Activated B cell treated with CpG ODN at 0.5 μM for 24 hours (primary cell): ENCODE measurements at regions of chr22 and their contacts with region 1.

Region 1: GRCh38 chr22:32103658-32104315 is 55.3 kb downstream of the C22orf42 start:
- DNase-seq: no peak
- ATAC-seq: no peak
- H3K4me3 Mint-ChIP-seq: no peak overlapping the region
- H3K27ac Mint-ChIP-seq: no peak overlapping the region
- H3K4me1 Mint-ChIP-seq: no peaks in the 10 kb centered on the region
- H3K27me3 Mint-ChIP-seq: peaks cover 25% of the 10 kb centered on the region
- CTCF ChIP-seq: no peak

Region 2: DNA sequence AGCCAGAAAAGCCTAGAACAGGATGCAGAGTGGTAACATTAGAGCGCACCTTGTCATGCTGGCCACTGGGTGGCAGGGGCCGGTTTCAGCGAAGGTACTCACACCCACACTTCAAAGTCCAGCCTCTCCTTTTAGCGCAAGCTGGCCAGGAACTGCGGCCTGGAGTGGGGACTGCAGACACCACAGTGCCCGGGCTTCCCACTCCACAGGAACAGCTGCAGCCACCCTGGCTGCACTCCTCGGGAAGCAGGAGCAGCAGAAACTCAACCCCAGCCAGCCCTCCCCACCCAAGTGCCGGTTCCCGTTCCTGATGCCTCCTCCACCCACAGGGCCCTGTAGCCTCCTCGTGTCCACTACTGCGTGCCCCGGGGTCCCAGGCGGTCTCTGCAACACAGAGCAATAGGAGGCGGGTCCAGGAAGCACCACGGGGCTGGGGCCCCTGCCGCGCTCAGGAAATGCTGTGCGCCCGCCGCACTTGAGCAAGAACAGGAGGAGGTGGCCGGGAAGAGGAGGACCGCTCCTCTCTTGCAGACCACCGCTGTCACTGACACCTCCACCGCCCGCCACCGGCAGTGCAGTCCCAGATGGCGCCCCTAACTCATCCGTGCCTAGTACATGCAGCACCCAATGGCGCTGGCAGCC is 98.9 kb after region 1 on chr22:
- CTCF ChIA-PET with region 1: no interaction called
- POLR2A ChIA-PET with region 1: no interaction called
- intact Hi-C with region 1: loop called (anchors 1 kb)
- DNase-seq: no peak
- ATAC-seq: no peak
- H3K4me3 Mint-ChIP-seq: no peak overlapping the region
- H3K27ac Mint-ChIP-seq: no peak overlapping the region
- H3K4me1 Mint-ChIP-seq: no peaks in the 10 kb centered on the region
- H3K27me3 Mint-ChIP-seq: peaks cover 40% of the 10 kb centered on the region
- CTCF ChIP-seq: no peak

Region 3: DNA sequence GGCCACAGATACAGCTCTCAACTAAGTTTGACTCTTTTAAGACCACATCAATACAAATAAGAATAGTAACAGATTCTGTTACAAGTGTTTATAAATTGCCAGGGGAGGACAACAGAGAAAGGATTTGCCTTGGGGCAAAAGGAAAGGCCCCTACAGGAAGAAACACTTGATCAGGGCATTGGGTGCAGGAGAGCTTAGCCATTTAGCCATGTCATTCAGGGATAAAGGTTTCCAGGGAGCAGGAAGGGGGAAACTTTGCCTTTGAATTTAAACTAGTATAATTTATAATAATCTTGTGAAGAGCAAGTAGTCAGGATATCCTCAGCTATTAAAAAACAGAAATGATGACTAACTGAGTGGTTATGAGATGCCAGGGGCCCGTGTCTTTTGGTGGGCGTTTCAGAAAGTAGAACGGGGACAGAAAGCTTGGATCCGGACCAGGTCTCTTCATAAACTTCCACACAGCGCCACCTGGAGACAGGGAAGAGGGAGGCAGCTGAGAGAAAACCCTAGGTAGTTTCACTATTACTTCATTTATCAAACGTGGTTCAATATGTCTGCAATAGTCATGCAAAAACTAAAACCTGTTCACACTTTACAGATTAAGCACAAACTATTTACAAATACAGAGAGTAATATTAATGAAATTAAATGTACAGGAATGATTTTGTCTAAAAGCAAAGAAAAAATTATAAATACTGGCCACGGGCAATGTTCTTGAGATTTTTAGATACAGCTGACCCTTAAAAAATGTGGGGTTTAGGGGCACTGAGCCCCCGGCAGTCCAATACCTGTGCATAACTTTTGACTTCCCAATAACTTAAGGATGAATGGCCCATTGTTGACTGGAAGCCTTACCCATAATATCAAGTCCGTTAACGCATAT is 162.3 kb after region 1 on chr22:
- CTCF ChIA-PET with region 1: interaction called, 16 read pairs
- POLR2A ChIA-PET with region 1: no interaction called
- intact Hi-C with region 1: loop called (anchors 1 kb)
- DNase-seq: no peak
- ATAC-seq: peak; percentile 42
- H3K4me3 Mint-ChIP-seq: no peak overlapping the region
- H3K27ac Mint-ChIP-seq: no peak overlapping the region
- H3K4me1 Mint-ChIP-seq: no peaks in the 10 kb centered on the region
- H3K27me3 Mint-ChIP-seq: peaks cover 4% of the 10 kb centered on the region
- CTCF ChIP-seq: no peak

Region 4: GRCh38 chr22:32444068-32444467 is 340.3 kb after region 1 on chr22:
- CTCF ChIA-PET with region 1: interaction called, 4 read pairs
- POLR2A ChIA-PET with region 1: no interaction called
- intact Hi-C with region 1: loop called (anchors 1 kb)
- DNase-seq: no peak
- ATAC-seq: no peak
- H3K4me3 Mint-ChIP-seq: no peak overlapping the region
- H3K27ac Mint-ChIP-seq: no peak overlapping the region
- H3K4me1 Mint-ChIP-seq: no peaks in the 10 kb centered on the region
- H3K27me3 Mint-ChIP-seq: peaks cover 7% of the 10 kb centered on the region
- CTCF ChIP-seq: no peak

Region 5: DNA sequence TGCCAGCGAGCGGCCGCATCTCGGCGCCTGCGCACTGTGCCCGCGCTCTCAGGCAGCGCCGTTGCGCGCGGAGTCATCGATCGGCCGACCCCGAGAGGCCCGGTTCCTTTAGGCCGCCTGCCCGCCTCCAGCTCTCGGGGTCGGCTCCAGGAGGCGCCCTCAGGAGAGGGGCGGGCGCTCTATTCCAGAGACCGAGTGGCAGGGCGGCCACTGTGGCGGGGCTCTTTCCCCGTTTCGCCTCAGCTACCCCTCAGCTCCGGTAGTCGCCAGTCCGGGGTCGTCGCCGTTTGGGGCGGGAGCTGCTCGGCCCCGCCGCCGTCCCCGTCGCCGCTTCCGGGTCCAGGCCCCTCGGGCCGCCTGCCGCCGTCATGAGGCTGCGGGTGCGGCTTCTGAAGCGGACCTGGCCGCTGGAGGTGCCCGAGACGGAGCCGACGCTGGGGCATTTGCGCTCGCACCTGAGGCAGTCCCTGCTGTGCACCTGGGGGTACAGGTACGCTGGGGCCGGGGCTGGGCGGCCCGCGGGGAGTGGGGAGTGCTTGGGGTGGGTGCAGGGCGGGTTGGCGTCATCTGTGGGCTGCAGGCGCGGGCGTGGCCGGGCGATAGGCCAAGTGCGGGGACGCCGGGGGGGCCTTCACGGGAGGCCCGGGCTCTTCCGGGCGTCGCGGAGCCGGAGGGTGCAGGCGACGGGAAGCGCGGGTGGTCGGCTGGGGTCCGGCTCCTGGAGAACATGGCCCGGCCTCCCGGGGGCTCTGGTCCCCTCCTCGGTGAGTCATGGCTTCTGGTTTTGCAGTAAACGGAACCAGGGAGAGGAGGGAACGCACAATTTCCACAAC is 371.1 kb after region 1 on chr22 and contains the start of gene FBXO7:
- CTCF ChIA-PET with region 1: interaction called, 6 read pairs
- POLR2A ChIA-PET with region 1: no interaction called
- intact Hi-C with region 1: loop called (anchors 1 kb)
- DNase-seq: peak; percentile 92
- ATAC-seq: peak; percentile 84
- H3K4me3 Mint-ChIP-seq: peak within 1 kb of the TSS; percentile 95
- H3K27ac Mint-ChIP-seq: peak within 1 kb of the TSS; percentile 91
- H3K4me1 Mint-ChIP-seq: peaks cover 30% of the 10 kb centered on the region
- H3K27me3 Mint-ChIP-seq: no peaks in the 10 kb centered on the region
- CTCF ChIP-seq: no peak
- total RNA-seq, gene FBXO7: 85.4 and 97.2 TPM in 2 replicates

Region 6: GRCh38 chr22:32985899-32986765 is 882.3 kb after region 1 on chr22:
- CTCF ChIA-PET with region 1: no interaction called
- POLR2A ChIA-PET with region 1: no interaction called
- intact Hi-C with region 1: loop called (anchors 5 kb)
- DNase-seq: no peak
- ATAC-seq: peak; percentile 56
- H3K4me3 Mint-ChIP-seq: no peak overlapping the region
- H3K27ac Mint-ChIP-seq: no peak overlapping the region
- H3K4me1 Mint-ChIP-seq: no peaks in the 10 kb centered on the region
- H3K27me3 Mint-ChIP-seq: no peaks in the 10 kb centered on the region
- CTCF ChIP-seq: no peak

Region 7: GRCh38 chr22:33000342-33001280 is 896.8 kb after region 1 on chr22:
- CTCF ChIA-PET with region 1: interaction called, 6 read pairs
- POLR2A ChIA-PET with region 1: no interaction called
- intact Hi-C with region 1: loop called (anchors 1 kb)
- DNase-seq: peak; percentile 33
- ATAC-seq: peak; percentile 56
- H3K4me3 Mint-ChIP-seq: no peak overlapping the region
- H3K27ac Mint-ChIP-seq: no peak overlapping the region
- H3K4me1 Mint-ChIP-seq: peaks cover 2% of the 10 kb centered on the region
- H3K27me3 Mint-ChIP-seq: peaks cover 15% of the 10 kb centered on the region
- CTCF ChIP-seq: no peak